IMR-90 (cell line): ENCODE measurements at regions of chr2 and their contacts with region 1.

Region 1: DNA sequence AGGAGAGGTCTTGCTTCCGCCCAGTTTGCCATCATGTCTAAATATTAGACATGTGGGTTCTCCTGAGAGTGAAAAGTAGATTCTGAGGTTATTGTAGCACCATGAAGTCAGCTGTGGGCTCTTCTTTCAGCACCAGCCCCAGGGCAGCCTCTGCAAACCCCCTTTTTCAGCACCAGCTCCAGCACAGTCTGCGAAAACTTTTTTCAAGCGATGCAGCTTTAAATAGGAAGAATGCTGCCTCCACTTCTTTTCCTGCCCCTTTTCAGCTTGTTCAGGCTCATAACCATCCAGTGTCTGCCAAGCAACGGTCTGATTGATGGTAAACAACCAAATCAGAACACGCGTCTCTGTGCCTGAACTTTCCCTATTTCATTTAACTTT is at the start of gene COL5A2:
- DNase-seq: peak; percentile 91
- ATAC-seq: peak; percentile 79
- H3K4me3 ChIP-seq: peak within 1 kb of the TSS; percentile 96
- H3K27ac ChIP-seq: peak within 1 kb of the TSS; percentile 87
- H3K4me1 ChIP-seq: peaks cover 2% of the 10 kb centered on the region; the same call in 1 of the 2 replicates
- H3K27me3 ChIP-seq: no peaks in the 10 kb centered on the region
- CTCF ChIP-seq: no peak
- POLR2A ChIP-seq: peak; percentile 80
- RAD21 ChIP-seq: peak; percentile 41
- total RNA-seq, gene COL5A2: 235 and 257 TPM in 2 replicates

Region 2: DNA sequence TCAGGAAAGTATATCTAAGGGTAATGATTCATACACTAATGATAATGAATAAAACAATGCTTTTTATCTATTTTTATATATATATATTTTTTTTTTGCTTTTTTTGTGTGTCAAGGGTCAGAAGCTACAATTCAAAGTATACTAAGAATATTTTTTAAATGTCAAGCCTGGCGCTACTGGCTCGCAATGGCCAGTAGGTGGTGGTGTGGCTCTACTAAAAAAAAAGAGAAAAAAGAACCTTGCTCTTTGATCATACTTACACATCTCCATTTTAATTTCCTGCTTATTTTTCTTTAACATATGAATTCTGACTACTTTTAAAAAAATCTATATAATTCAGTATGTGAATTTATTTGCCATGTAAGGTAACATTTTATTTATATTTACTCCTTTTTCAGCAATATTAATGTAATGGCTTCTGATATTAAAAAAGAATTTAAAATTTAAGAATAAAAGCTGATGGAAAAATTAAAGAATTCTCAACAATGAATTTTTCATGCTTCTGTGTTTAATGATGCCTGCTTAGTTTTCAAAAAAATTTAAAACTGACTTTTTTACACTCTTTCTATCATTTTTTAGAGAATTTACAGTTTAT is 654.9 kb before region 1 on chr2:
- CTCF ChIA-PET with region 1: no interaction called
- POLR2A ChIA-PET with region 1: no interaction called
- dilution Hi-C with region 1: no loop called
- in situ Hi-C with region 1: no loop called
- intact Hi-C with region 1: loop called (anchors 10 kb)
- DNase-seq: peak; percentile 69
- ATAC-seq: peak; percentile 69; the same call in 1 of the 2 replicates
- H3K4me3 ChIP-seq: no peak overlapping the region
- H3K27ac ChIP-seq: no peak overlapping the region
- H3K4me1 ChIP-seq: peaks cover 2% of the 10 kb centered on the region; the same call in 1 of the 2 replicates
- H3K27me3 ChIP-seq: no peaks in the 10 kb centered on the region
- CTCF ChIP-seq: peak; percentile 85
- POLR2A ChIP-seq: no peak
- RAD21 ChIP-seq: peak; percentile 80

Region 3: DNA sequence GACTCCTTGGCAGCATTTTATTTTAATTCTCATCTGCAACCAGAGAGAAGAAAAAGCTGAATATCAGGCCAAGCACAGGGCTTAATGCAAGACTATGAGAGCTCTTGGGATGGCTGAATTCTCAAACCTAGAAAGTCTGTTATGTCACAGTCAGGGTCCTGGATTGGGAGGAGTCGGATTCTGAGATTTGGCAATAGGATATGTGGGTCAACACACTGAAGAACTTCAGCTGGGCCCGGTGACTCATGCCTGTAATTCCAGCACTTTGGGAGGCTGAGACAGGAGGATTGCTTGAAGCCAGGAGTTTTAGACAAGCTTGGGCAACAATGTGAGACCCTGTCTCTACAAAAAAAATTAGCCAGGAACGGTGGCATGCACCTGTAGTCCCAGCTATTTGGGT is 103.0 kb before region 1 on chr2:
- CTCF ChIA-PET with region 1: no interaction called
- POLR2A ChIA-PET with region 1: no interaction called
- dilution Hi-C with region 1: no loop called
- in situ Hi-C with region 1: no loop called
- intact Hi-C with region 1: no loop called
- DNase-seq: peak; percentile 49
- ATAC-seq: peak; percentile 61
- H3K4me3 ChIP-seq: no peak overlapping the region
- H3K27ac ChIP-seq: peak overlapping the region; percentile 45; the same call in 1 of the 2 replicates
- H3K4me1 ChIP-seq: peaks cover 2% of the 10 kb centered on the region; the same call in 1 of the 2 replicates
- H3K27me3 ChIP-seq: no peaks in the 10 kb centered on the region
- CTCF ChIP-seq: no peak
- POLR2A ChIP-seq: no peak
- RAD21 ChIP-seq: no peak

Region 4: DNA sequence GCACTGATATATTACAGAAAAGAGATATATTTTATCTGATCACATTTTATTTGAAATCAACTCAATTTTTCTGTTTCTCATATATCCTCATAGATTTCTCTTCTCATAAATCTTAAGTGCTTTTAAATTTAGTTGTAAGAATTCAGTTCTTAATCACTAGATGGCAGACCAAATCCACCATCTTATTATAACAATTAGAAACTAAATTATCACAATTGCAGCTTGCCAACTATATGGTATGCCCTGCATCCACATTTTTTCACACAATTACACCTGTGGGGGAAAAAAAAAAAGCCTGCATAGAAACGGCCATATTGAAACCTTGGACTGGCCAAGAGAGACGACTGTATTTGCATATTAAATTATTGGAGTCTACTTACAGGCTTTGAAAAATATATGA is 64.4 kb before region 1 on chr2:
- CTCF ChIA-PET with region 1: interaction called, 3 read pairs
- POLR2A ChIA-PET with region 1: interaction called, 8 read pairs
- dilution Hi-C with region 1: no loop called
- in situ Hi-C with region 1: no loop called
- intact Hi-C with region 1: loop called (anchors 2 kb)
- DNase-seq: peak; percentile 38
- ATAC-seq: no peak
- H3K4me3 ChIP-seq: no peak overlapping the region
- H3K27ac ChIP-seq: peak overlapping the region; percentile 61; the same call in 1 of the 2 replicates
- H3K4me1 ChIP-seq: peaks cover 17% of the 10 kb centered on the region
- H3K27me3 ChIP-seq: no peaks in the 10 kb centered on the region
- CTCF ChIP-seq: peak; percentile 32
- POLR2A ChIP-seq: no peak
- RAD21 ChIP-seq: peak; percentile 48

Region 5: GRCh38 chr2:189210250-189211075 is 30.9 kb after region 1 on chr2:
- CTCF ChIA-PET with region 1: no interaction called
- POLR2A ChIA-PET with region 1: interaction called, 31 read pairs
- dilution Hi-C with region 1: no loop called
- in situ Hi-C with region 1: no loop called
- intact Hi-C with region 1: loop called (anchors 1 kb)
- DNase-seq: peak; percentile 98
- ATAC-seq: peak; percentile 73
- H3K4me3 ChIP-seq: peak overlapping the region; percentile 5; the same call in 1 of the 2 replicates
- H3K27ac ChIP-seq: peak overlapping the region; percentile 96
- H3K4me1 ChIP-seq: peaks cover 14% of the 10 kb centered on the region
- H3K27me3 ChIP-seq: no peaks in the 10 kb centered on the region
- CTCF ChIP-seq: no peak
- POLR2A ChIP-seq: no peak
- RAD21 ChIP-seq: no peak

Region 6: DNA sequence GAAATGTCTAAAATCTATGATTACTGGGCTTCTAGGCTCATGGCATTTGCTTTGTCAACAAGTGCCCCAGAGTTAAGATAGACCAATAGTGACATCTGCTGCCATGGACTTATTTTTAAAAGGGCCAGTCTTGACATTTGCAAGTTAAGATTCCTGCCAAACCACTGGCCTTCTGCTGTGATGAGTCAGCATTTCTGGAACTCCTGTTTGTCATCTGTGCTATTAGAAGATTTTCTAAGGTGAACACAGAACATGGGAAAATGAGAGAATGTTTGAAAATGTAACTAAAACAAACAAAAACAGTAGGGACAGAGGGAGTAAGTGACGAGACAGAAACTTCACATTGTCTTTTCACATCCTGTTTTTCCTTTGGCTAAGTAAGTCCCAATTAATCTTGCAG is 168.0 kb after region 1 on chr2:
- CTCF ChIA-PET with region 1: no interaction called
- POLR2A ChIA-PET with region 1: interaction called, 4 read pairs
- dilution Hi-C with region 1: no loop called
- in situ Hi-C with region 1: no loop called
- intact Hi-C with region 1: loop called (anchors 1 kb)
- DNase-seq: peak; percentile 96
- ATAC-seq: peak; percentile 90
- H3K4me3 ChIP-seq: no peak overlapping the region
- H3K27ac ChIP-seq: peak overlapping the region; percentile 89; the same call in 1 of the 2 replicates
- H3K4me1 ChIP-seq: peaks cover 8% of the 10 kb centered on the region
- H3K27me3 ChIP-seq: no peaks in the 10 kb centered on the region
- CTCF ChIP-seq: peak; percentile 65
- POLR2A ChIP-seq: no peak
- RAD21 ChIP-seq: peak; percentile 89

Region 7: GRCh38 chr2:189698020-189698887 is 518.7 kb after region 1 on chr2:
- CTCF ChIA-PET with region 1: no interaction called
- POLR2A ChIA-PET with region 1: no interaction called
- dilution Hi-C with region 1: no loop called
- in situ Hi-C with region 1: no loop called
- intact Hi-C with region 1: no loop called
- DNase-seq: peak; percentile 48
- ATAC-seq: peak; percentile 57
- H3K4me3 ChIP-seq: no peak overlapping the region
- H3K27ac ChIP-seq: no peak overlapping the region
- H3K4me1 ChIP-seq: no peaks in the 10 kb centered on the region
- H3K27me3 ChIP-seq: no peaks in the 10 kb centered on the region
- CTCF ChIP-seq: peak; percentile 53
- POLR2A ChIP-seq: no peak
- RAD21 ChIP-seq: peak; percentile 31